CD14-positive monocyte (primary cell): ENCODE measurements at regions of chr1 and their contacts with region 1.

Region 1: DNA sequence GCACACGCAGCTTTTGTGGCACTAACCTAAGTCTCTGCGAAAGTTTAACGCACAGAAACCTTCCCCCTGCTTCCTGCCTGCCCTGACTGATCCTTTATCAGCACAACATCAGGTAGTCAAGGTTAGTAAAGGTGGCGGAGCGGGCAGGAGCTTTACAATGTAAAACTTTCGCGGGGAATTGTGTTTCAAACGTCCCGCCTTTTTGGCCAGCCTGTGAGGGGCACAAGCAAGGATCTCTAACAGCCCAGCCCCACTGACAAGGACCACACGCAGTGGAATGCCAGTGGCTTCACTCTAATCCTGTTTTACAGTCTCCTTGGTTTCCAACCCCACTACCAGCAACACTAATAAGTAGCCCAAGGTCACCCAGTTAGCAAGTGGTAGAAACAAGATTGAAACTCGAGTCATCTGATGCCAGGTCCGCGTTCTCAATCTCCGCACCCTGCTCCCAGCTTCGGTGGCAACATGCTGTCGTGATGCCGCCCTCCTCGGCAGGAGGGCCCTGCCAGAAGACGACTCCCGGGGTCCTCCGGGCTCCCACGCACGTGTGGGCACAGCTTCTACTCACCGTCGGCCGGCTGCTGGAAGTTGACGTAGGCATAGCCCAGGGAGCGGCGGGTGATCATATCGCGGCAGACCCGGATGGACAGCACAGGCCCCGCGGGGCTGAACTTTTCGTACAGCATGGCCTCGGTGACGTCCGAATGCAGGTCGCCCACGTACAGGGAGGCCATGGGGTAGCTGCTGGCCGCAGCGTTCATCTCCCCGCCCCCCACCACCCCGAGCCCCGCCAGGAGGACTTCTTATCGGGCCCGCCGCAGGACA is 1.2 kb downstream of the PABPC4 start:
- DNase-seq: peak; percentile 15 to 45 (median 41)
- H3K4me3 ChIP-seq: peak overlapping the region; percentile 70 to 86 (median 72)
- H3K4me3 Mint-ChIP-seq: peak overlapping the region; percentile 92 to 93
- H3K27ac ChIP-seq: peak overlapping the region; percentile 14 to 79
- H3K27ac Mint-ChIP-seq: peak overlapping the region; percentile 80 to 92 (median 88)
- H3K4me1 ChIP-seq: peaks cover 24 to 28% of the 10 kb centered on the region in 2 donors
- H3K4me1 Mint-ChIP-seq: peaks cover 27% of the 10 kb centered on the region
- H3K27me3 ChIP-seq: no peaks in the 10 kb centered on the region
- H3K27me3 Mint-ChIP-seq: peaks cover 3 to 4% (median 3%) of the 10 kb centered on the region in 3 donors
- CTCF ChIP-seq: no peak

Region 2: DNA sequence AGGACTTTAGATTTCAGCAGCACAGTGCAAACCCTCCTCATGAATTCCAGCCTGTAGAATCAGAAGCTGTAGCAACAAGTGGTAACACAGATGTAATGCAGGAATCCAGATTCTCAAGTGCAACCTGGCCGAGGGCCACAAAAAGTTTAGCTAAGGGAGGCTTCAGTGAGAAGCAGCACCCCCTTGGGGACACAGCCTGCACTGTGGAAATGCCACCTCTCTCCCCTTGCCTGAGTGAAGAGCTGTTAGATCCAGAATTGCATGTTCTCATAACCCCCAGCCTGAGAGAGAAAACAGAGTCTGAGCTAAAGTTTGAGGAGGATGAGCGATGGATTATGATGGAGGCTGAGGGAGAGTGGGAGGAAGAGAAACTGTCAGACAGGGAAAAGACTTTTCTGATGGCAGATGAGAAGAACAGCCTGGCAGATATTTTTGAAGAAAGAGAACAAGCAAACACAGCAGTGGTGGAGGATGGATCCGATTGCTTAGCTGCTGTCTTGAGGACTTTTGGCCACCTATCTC is 164.4 kb before region 1 on chr1:
- intact Hi-C with region 1: no loop called
- DNase-seq: peak; percentile 35 to 49 (median 46)
- H3K4me3 ChIP-seq: peak overlapping the region in 1 of 3 experiments; percentile 82
- H3K4me3 Mint-ChIP-seq: no peak overlapping the region
- H3K27ac ChIP-seq: no peak overlapping the region
- H3K27ac Mint-ChIP-seq: peak overlapping the region in 3 of 7 donors; percentile 17 to 57 (median 52)
- H3K4me1 ChIP-seq: peaks cover 34 to 47% of the 10 kb centered on the region in 2 donors
- H3K4me1 Mint-ChIP-seq: peaks cover 61% of the 10 kb centered on the region
- H3K27me3 ChIP-seq: no peaks in the 10 kb centered on the region
- H3K27me3 Mint-ChIP-seq: no peaks in the 10 kb centered on the region
- CTCF ChIP-seq: peak; percentile 64

Region 3: DNA sequence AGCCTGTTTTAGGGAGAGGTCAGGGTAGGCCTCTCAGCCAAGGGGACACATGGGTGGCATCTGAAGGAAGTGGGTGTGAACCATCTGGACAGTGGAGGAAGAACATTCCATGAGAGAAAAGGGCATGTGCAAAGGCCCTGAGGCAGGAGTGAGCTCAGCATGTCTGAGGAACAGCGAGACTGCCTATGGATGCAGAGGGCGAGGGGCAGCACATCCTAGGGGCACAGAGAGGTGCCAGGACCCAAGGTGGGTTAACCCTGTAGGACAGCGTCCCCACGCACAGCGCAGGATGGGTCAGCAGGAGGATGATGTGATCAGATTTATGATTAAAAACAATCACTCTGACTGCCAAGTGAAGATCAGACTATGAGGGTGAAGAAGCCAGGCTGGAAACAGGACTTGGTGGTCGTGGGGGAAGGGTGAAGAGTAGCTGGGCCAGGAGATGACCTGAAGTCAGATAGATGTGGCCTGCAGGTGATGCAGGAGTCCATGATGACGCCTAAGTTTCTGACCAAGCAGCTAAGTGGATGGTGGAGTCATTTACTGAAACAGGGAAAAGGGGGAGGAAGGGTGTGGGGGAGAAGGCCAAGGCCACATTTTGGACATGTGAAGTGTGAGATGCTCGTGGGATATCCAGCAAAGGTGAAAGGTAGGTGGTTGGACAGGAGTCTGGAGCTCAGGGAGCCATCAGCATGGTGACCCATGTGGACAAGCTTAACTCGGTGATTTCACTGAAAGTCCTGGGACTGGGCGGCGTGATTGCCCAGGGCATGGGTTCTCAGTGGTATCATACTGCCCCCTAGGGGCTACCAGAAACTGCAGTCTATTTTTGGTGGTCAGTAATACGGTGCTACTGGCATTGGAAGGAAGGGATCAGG is 36.6 kb before region 1 on chr1:
- intact Hi-C with region 1: loop called in 1 of 2 experiments (anchors 5 kb)
- DNase-seq: peak; percentile 68 to 78 (median 69)
- H3K4me3 ChIP-seq: no peak overlapping the region
- H3K4me3 Mint-ChIP-seq: no peak overlapping the region
- H3K27ac ChIP-seq: no peak overlapping the region
- H3K27ac Mint-ChIP-seq: peak overlapping the region in 6 of 7 donors; percentile 21 to 99 (median 66)
- H3K4me1 ChIP-seq: peaks cover 30 to 32% of the 10 kb centered on the region in 2 donors
- H3K4me1 Mint-ChIP-seq: peaks cover 34% of the 10 kb centered on the region
- H3K27me3 ChIP-seq: no peaks in the 10 kb centered on the region
- H3K27me3 Mint-ChIP-seq: no peaks in the 10 kb centered on the region
- CTCF ChIP-seq: peak; percentile 87